ENCODE measurements at regions of chr5 and their contacts with region 1.

Region 1: DNA sequence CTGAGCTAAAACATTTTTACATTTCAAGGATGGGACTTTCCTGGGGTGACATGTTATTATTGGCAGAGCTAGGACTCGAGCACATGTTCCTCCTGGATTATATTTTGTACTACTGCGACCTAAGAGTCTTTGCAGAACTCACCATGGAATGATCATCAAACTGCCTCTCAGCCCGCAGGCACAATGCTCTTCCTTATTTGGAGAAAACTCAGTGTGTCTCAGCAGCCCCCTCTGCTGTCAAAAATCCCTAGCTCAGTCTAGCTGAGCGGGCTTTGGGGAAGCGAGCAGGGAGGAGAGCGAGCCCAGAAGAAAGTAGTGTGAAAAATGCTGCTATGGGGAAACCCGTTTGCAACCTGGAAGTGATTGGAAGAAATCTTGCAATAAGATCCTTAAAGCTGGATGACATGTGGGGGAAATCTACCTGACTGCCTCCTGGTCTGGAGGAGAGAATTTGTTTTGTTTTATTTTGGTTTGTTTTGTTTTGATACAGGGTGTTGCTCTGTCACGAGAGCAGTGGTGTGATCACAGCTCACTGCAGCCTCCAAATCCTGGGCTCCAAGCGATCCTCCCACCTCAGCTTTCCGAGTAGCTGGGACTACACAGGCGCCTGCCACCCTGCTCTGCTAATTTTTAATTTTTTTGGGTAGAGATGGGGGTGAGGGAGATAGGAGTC is 89.9 kb upstream of the CLINT1 start:
- DNase-seq: peak; percentile 77
- CTCF ChIP-seq: peak; percentile 95

Region 2: GRCh38 chr5:157677931-157678330 is 270.9 kb before region 1 on chr5:
- CTCF ChIA-PET with region 1: no interaction called
- POLR2A ChIA-PET with region 1: no interaction called
- DNase-seq: no peak
- CTCF ChIP-seq: no peak

Region 3: DNA sequence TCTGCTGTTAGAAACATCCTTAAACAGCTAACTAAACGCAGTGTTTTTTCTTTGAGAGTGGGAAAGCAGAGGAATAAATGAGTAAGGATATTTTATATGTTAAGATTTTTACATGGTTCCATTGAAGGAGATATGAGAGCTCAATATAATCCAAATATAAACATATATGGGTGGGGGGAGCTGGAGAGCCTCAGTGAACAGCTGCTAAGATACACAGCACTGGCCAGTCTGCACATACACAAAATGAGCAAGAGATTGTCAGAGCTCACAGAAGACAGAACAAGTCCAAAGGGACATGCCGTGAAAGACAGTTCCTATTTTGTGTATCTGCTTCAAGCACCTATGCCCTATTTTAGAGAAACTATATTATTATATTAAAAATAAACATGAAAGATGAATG is 136.8 kb before region 1 on chr5:
- CTCF ChIA-PET with region 1: interaction called, 91 read pairs
- POLR2A ChIA-PET with region 1: no interaction called
- DNase-seq: no peak
- CTCF ChIP-seq: no peak

Region 4: DNA sequence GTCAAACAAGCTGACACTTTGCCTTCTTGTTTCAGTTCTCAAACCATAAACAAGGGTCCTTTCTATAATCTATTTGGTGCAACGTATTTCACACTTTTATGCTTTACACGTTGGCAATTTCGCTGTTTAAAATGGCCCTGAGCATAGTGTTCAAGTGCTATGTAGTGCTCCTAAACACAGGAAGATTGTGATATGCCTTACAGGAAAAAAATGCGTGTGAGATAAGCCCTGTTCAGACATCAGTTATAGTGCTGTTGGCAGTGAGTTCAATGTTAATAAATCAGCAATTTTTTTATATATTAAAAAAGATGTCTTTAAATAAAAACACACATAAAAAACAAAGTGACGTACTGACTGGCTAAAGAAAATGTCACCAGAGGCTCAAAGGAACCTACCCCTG is 113.8 kb before region 1 on chr5:
- CTCF ChIA-PET with region 1: interaction called, 33 read pairs
- POLR2A ChIA-PET with region 1: no interaction called
- DNase-seq: no peak
- CTCF ChIP-seq: no peak

Region 5: GRCh38 chr5:157917899-157918809 is 30.7 kb before region 1 on chr5:
- CTCF ChIA-PET with region 1: interaction called, 22 read pairs
- POLR2A ChIA-PET with region 1: no interaction called
- DNase-seq: peak; percentile 56
- CTCF ChIP-seq: peak; percentile 63

Region 6: DNA sequence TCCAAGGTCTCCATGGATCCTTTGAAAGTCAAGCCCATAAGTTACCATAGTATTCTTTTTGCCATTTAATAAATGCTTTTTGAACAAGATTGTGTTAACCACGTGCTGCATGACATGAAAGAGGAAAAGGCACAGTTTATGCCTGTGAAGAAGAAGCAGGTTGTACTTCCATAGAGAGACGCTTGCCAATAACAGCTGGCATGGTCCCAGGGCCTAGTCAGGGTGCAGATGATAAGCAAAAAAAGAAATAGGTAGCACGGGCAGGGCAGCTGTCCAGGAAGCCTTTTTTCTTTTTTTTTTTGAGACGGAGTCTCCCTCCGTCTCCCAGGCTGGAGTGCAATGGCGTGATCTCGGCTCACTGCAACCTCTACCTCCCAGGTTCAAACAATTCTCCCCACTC is 18.2 kb before region 1 on chr5:
- CTCF ChIA-PET with region 1: interaction called, 67 read pairs
- POLR2A ChIA-PET with region 1: no interaction called
- DNase-seq: no peak
- CTCF ChIP-seq: no peak

Region 7: DNA sequence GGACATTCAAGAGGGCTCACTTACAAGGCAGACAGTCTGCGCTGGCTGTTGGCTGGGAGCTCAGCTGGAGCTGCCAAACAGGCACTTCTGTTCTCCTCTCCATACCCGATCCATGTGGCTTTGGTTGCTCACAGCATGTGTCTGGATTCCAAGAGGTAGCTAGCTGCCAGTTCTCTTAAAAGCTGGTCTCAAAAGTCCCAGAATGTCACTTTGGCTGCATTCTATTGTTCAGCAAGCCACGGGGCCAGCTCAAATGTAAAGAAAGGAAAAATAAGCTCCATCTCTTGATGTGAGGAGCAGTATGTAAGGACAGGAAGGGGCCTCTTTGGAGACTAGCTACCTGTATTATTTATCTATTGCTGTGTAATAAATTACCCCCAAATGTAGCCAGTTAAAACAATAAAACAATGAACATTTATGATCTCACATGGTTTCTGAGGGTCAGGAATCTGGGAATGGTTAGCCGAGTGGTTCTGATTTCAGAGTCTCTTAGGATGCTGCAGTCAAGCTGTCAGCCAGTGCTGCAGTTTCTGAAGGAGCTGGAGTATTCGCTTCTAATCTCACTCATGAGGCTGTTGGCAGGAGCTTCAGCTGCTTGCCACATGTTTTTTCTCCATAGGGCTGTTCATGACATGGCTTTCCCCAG is 22.8 kb after region 1 on chr5:
- CTCF ChIA-PET with region 1: interaction called, 17 read pairs
- POLR2A ChIA-PET with region 1: no interaction called
- DNase-seq: no peak
- CTCF ChIP-seq: no peak

Region 8: DNA sequence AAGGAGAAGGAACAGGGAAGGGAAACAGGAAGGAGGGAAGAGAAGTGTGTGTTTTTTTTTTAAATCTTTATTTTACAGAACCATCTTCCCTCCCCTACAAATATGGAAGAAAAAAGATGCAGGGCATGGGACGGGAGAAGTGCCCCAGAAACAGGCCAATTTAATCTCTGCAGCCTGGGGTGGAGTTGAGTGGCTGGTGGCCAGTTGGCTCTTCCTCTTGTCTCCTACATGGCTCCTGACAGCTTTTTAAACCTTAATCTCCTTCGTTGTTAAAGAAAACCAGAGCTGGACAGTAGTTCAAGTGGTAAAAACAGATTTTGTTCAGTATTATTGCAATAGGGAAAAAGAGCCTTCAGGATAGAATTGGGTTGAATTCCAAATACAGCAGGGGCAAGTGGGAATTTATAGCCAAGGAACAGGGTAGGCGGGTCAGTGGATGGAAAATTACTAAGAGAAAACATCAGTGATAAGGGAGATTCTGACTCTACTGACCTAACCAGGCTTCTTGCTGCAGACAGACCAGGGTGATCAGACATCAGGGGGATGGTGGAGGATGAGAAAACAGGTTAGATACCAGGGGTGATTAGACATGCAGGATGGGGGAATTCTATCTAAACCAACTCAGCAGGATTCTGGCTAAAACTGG is 35.2 kb after region 1 on chr5:
- CTCF ChIA-PET with region 1: no interaction called
- POLR2A ChIA-PET with region 1: no interaction called
- DNase-seq: no peak
- CTCF ChIP-seq: no peak

Measured in GM10248 (cell line).